Activated CD4-positive, alpha-beta T cell treated with anti-CD3 and anti-CD28 coated beads, Interleukin-2, amount 10 ng/mL, durations not matched to agents 24 days and 14 days (primary cell): ENCODE measurements at regions of chr16 and their contacts with region 1.

Region 1: GRCh38 chr16:67968400-67969253 is at the start of gene SLC12A4:
- DNase-seq: peak; percentile 98
- H3K4me3 Mint-ChIP-seq: peak within 1 kb of the TSS; percentile 97
- H3K27ac Mint-ChIP-seq: peak within 1 kb of the TSS; percentile 95
- H3K4me1 Mint-ChIP-seq: peaks cover 24% of the 10 kb centered on the region
- H3K27me3 Mint-ChIP-seq: peaks cover 2% of the 10 kb centered on the region
- total RNA-seq, gene SLC12A4: 40.6 and 44.7 TPM in 2 replicates

Region 2: DNA sequence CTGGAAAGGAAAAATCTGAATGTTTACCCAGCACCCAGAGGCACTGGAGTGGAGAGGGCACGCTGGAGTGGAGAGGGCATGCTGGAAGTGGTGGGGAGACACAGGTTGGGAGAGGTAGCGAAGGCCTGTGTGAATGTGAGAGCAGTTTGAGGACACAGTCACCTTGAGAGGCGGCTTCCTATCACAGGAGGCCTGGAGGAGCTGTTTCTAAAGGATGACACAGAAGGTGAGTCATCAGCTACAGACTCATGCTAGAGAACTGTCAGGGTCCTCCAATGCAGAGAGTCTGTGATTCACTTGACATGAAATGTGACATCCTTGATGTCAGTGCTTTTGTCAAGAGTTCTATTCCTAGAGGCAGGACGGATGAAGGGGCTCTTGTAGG is 50.8 kb before region 1 on chr16:
- intact Hi-C with region 1: no loop called
- DNase-seq: peak; percentile 74
- H3K4me3 Mint-ChIP-seq: no peak overlapping the region
- H3K27ac Mint-ChIP-seq: peak overlapping the region; percentile 90
- H3K4me1 Mint-ChIP-seq: peaks cover 26% of the 10 kb centered on the region
- H3K27me3 Mint-ChIP-seq: no peaks in the 10 kb centered on the region

Region 3: DNA sequence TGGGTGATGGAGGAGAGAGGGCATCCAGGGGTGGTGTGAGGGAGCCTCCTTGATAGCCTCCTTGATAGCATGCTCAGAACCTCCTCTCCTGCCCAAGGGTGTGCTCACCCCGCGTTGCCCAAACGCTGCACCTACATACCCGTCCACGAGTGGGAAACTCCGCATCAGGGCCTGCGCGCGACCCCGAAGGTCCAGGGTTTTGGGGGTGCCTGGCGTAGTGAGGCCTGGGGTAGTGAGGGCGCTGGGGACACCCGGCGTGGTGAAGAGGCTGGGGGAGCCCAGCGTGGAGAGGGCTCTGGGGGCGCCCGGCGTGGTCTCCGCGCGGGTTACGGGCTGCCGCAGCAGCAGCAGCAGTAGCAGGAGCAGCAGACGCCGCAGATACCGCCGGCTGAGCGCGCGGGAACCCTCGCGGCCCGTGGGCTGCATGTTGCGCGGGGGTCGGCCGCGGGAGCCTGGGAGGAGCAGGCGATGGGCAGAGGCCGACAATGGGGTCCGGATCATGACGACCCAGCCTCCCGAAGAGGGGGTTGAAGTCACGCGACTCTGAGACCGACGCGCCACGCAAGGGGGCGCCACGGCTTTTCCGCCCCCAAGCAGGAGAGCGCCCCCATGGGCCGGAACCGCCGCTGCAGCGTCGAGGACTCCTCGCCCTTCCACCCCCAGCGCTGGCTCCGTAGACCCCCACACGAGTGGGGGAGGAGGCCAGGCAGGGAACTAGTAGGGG is 11.5 kb after region 1 on chr16 and contains the start of gene DPEP3:
- intact Hi-C with region 1: loop called (anchors 2 kb)
- DNase-seq: no peak
- H3K4me3 Mint-ChIP-seq: no peak within 1 kb of the TSS
- H3K27ac Mint-ChIP-seq: no peak within 1 kb of the TSS
- H3K4me1 Mint-ChIP-seq: peaks cover 13% of the 10 kb centered on the region
- H3K27me3 Mint-ChIP-seq: peaks cover 3% of the 10 kb centered on the region
- total RNA-seq, gene DPEP3: not detected in 2 replicates

Region 4: DNA sequence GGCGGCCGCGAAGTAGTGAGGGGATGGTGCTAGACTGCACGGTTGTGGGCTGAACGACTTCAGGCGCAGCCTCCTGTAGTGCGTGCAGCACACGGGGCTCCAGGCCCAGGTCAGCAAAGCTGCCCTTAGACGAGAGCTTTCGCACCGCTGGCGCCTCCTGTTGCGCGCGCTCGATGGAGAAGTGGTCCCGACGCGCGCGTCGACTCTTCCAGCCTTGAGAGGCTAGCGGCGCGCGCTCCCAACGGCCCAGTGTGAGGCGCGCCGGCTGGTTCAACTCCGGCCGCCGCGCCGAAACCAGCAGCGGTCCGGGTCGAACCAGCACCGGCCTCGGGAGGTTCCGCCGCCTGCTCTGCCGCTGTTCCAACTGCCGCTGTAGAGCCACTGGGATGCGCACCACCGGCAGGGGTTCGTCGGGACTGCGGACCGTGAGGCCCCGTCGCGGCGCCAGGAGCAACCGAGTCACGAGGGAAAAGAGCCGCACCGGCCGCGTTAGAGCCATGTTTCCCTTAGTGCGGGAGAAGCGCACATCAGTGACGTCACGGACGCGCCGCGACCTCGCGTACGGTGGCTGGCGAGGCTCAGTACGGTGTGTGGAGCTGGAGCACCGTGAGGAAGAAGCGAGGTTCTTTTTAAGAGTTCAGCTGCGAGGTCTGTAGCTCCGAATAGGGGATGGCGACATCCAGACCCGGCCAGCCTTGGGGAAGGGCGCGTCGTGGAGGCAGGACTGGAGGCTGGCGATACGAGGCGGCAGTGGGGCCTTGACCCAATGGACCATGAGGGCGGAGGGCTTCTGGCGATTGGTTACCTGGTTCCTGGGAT is 54.3 kb after region 1 on chr16 and contains the starts of genes DDX28 and DUS2:
- intact Hi-C with region 1: loop called (anchors 2 kb)
- DNase-seq: peak; percentile 99
- H3K4me3 Mint-ChIP-seq: peak within 1 kb of the TSS; percentile 95
- H3K27ac Mint-ChIP-seq: peak within 1 kb of the TSS; percentile 96
- H3K4me1 Mint-ChIP-seq: peaks cover 22% of the 10 kb centered on the region
- H3K27me3 Mint-ChIP-seq: no peaks in the 10 kb centered on the region
- total RNA-seq, gene DDX28: 23.9 and 26.1 TPM in 2 replicates
- total RNA-seq, gene DUS2: 35.3 and 42.6 TPM in 2 replicates

Region 5: DNA sequence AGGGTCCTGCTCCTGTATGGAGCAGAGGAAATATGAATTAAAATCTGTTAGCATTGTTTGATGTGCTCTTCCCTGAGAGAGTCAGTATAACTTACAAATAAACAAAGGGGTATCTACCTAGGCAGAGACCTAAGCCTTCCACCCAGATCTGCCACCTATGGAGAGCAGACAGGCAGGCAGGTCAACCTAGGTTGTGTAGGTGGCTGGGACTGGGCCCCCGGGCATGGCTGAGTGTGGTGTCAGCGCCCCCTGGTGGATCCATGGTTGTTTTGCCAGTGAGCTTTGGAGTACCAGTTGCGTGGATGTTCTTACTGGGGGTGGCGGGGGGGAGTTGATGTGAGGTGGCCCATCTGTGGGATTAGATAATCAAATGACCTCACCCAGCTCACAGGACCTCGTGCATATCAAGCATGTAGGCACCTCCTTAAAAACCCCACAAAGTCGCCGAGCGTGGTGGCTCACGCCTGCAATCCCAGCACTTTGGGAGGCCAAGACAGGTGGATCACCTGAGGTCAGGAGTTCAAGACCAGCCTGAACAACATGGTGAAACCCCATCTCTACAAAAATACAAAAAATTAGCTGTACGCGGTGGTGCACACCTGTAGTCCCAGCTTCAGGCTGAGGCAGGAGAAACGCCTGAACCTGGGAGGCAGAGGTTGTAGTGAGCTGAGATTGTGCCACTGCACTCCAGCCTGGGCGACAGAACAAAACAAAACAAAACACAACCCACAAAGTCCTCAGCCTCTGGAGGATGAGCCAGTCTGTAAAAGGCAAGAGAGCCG is 72.1 kb after region 1 on chr16:
- intact Hi-C with region 1: loop called (anchors 1 kb)
- DNase-seq: peak; percentile 96
- H3K4me3 Mint-ChIP-seq: no peak overlapping the region
- H3K27ac Mint-ChIP-seq: peak overlapping the region; percentile 51
- H3K4me1 Mint-ChIP-seq: peaks cover 16% of the 10 kb centered on the region
- H3K27me3 Mint-ChIP-seq: no peaks in the 10 kb centered on the region